ENCODE measurements at regions of chr11 and their contacts with region 1.

Region 1: GRCh38 chr11:59158206-59159068 is 13.5 kb upstream of the DTX4 start:
- DNase-seq: peak; percentile 76
- ATAC-seq: peak; percentile 95
- H3K4me3 Mint-ChIP-seq: no peak overlapping the region
- H3K27ac Mint-ChIP-seq: peak overlapping the region; percentile 18
- H3K4me1 Mint-ChIP-seq: peaks cover 8% of the 10 kb centered on the region
- H3K27me3 Mint-ChIP-seq: peaks cover 15% of the 10 kb centered on the region

Region 2: DNA sequence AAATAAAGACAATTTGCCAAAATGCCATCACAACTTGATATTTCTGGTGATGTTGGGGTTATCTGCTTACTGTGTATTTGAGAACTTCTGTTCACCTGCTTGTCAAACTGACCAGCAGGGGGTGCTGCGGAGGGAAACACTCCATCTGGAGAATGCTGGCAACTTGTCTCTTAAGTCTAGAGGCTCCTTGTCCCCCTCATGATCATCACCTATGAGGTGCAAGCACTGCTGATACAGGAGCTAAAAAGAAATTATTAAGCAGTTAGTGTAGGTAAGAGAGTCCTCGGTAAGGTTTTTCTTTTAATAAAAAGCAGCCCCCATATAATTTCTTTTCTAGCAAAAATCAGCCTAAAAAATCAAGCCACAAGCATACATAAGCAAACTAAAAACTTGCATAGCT is 105.0 kb before region 1 on chr11:
- CTCF ChIA-PET with region 1: interaction called, 36 read pairs
- POLR2A ChIA-PET with region 1: no interaction called
- DNase-seq: peak; percentile 85
- ATAC-seq: peak; percentile 76
- H3K4me3 Mint-ChIP-seq: no peak overlapping the region
- H3K27ac Mint-ChIP-seq: no peak overlapping the region
- H3K4me1 Mint-ChIP-seq: peaks cover 11% of the 10 kb centered on the region
- H3K27me3 Mint-ChIP-seq: peaks cover 14% of the 10 kb centered on the region

Region 3: DNA sequence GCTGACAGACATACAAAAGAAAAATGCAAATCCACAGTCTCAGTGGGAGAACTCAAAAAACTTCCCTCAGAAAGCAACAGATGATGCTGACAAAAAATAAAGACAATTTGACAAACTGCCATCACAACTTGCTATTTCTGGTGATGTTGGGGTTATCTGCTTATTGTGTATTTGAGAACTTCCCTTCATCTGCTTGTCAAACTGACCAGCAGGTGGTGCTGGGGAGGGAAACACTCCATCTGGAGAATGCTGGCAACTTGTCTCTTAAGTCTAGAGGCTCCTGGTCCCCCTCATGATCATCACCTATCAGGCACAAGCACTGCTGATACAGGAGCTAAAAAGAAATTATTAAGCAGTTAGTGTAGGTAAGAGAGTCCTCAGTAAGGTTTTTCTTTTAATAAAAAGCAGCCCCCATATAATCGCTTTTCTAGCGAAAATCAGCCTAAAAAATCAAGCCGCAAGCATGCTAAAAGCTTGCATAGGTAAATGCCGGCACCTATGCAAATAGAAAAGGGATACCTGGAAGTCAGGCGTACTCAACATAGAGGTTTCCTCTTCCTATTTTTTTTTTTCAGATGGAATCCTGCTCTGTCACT is 61.2 kb before region 1 on chr11:
- CTCF ChIA-PET with region 1: interaction called, 26 read pairs
- POLR2A ChIA-PET with region 1: no interaction called
- DNase-seq: peak; percentile 77
- ATAC-seq: peak; percentile 79
- H3K4me3 Mint-ChIP-seq: no peak overlapping the region
- H3K27ac Mint-ChIP-seq: no peak overlapping the region
- H3K4me1 Mint-ChIP-seq: peaks cover 15% of the 10 kb centered on the region
- H3K27me3 Mint-ChIP-seq: peaks cover 30% of the 10 kb centered on the region

Region 4: GRCh38 chr11:59106363-59107336 is 51.8 kb before region 1 on chr11 and contains the start of gene FAM111B:
- CTCF ChIA-PET with region 1: interaction called, 34 read pairs
- POLR2A ChIA-PET with region 1: no interaction called
- DNase-seq: peak; percentile 89
- ATAC-seq: peak; percentile 95
- H3K4me3 Mint-ChIP-seq: peak within 1 kb of the TSS; percentile 92
- H3K27ac Mint-ChIP-seq: peak within 1 kb of the TSS; percentile 86
- H3K4me1 Mint-ChIP-seq: peaks cover 70% of the 10 kb centered on the region
- H3K27me3 Mint-ChIP-seq: peaks cover 11% of the 10 kb centered on the region
- total RNA-seq, gene FAM111B: 66.2 to 69.0 TPM

Region 5: GRCh38 chr11:59135648-59136461 is 22.6 kb before region 1 on chr11:
- CTCF ChIA-PET with region 1: interaction called, 178 read pairs
- POLR2A ChIA-PET with region 1: interaction called, 3 read pairs
- DNase-seq: peak; percentile 92
- ATAC-seq: peak; percentile 99
- H3K4me3 Mint-ChIP-seq: peak overlapping the region; percentile 54
- H3K27ac Mint-ChIP-seq: peak overlapping the region; percentile 84
- H3K4me1 Mint-ChIP-seq: peaks cover 24% of the 10 kb centered on the region
- H3K27me3 Mint-ChIP-seq: no peaks in the 10 kb centered on the region

Region 6: DNA sequence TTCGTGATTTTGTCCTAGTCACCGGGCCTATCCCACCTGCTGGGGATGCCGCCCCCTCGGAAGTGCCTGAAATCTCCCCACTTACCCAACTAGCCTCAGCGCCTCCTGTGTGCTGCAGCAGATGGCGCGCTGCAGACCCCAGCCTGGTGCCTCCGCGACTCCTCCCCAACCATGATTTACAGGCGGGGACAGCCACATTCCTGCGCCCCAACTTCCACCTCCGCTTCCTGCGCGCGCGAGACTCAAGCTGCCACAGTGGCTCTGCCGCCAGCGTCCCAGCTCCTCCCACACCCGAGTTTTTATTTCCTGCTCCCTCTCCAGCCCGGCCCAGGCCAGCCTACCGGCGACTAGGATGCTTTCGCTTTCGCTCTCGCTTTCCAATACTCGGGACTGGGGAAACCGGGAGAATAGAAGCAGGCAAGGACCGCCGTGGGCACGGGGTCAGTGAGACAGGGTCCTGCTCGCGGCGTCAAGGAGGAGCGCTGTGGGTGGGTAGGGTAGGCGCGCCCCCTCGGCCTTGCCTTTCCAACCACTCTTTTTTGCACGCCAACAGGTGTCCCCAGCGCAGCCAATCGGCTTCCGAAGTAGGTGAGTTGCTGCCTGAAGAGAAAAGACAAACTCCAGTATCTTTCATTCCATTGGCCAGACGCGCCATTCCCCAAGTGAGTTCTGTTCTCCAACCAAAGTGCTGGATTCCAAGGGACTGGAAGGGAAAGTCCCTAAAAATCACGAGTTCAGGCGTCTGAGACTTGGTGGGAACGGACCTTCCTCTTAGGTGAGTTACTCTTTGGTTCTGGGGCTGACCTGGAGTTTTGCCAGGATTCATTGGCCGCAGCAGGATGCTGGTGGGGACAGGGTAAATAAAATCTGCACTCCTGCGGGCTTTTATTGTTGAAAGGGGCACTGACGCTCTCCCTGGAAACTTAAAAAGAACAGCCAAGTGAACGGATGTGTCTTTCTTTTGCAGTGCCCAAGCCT is 15.6 kb before region 1 on chr11 and contains the start of gene FAM111A:
- CTCF ChIA-PET with region 1: interaction called, 178 read pairs
- POLR2A ChIA-PET with region 1: interaction called, 13 read pairs
- DNase-seq: peak; percentile 94
- ATAC-seq: peak; percentile 93
- H3K4me3 Mint-ChIP-seq: peak within 1 kb of the TSS; percentile 97
- H3K27ac Mint-ChIP-seq: peak within 1 kb of the TSS; percentile 97
- H3K4me1 Mint-ChIP-seq: peaks cover 55% of the 10 kb centered on the region
- H3K27me3 Mint-ChIP-seq: no peaks in the 10 kb centered on the region
- total RNA-seq, gene FAM111A: 154 to 167 TPM

Region 7: DNA sequence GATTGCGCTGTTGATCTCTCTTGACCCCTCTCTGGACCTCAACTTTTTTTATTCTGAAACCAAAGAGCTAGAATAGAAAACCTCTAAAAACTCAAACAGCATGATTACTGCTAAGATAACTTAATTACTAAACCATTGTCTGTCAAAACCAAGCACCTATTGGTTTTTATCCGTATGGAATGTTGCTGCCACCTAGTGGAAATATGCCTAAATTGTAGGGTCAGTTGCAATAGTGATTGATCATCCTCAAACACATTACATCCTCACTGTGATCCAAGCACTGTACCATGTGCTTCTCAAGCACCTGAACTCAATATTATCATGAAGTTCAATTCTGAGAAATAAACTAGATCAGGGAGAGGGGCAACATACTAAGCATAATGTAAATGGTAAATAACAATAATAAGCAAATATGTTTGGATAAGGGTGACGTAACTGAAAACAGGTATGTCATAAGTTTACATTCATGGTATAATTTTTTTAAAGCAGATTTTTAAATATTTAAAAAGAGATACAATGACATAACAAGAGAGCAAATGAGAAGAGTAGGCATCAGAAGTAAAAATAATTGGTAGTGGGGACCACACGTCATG is 271.6 kb after region 1 on chr11:
- CTCF ChIA-PET with region 1: interaction called, 13 read pairs
- POLR2A ChIA-PET with region 1: no interaction called
- DNase-seq: peak; percentile 68
- ATAC-seq: peak; percentile 61
- H3K4me3 Mint-ChIP-seq: no peak overlapping the region
- H3K27ac Mint-ChIP-seq: no peak overlapping the region
- H3K4me1 Mint-ChIP-seq: no peaks in the 10 kb centered on the region
- H3K27me3 Mint-ChIP-seq: peaks cover 16% of the 10 kb centered on the region